ENCODE measurements at regions of chr6 and their contacts with region 1.

Region 1: GRCh38 chr6:5143634-5144311 is 58.6 kb downstream of the PPP1R3G start:
- DNase-seq: peak; percentile 87
- H3K4me3 Mint-ChIP-seq: no peak overlapping the region
- H3K27ac Mint-ChIP-seq: no peak overlapping the region
- H3K4me1 Mint-ChIP-seq: peaks cover 1% of the 10 kb centered on the region
- H3K27me3 Mint-ChIP-seq: no peaks in the 10 kb centered on the region

Region 2: GRCh38 chr6:4928426-4928825 is 215.3 kb before region 1 on chr6:
- CTCF ChIA-PET with region 1: no interaction called
- POLR2A ChIA-PET with region 1: no interaction called
- DNase-seq: no peak
- H3K4me3 Mint-ChIP-seq: no peak overlapping the region
- H3K27ac Mint-ChIP-seq: no peak overlapping the region
- H3K4me1 Mint-ChIP-seq: peaks cover 24% of the 10 kb centered on the region
- H3K27me3 Mint-ChIP-seq: no peaks in the 10 kb centered on the region

Region 3: GRCh38 chr6:5053038-5053437 is 90.7 kb before region 1 on chr6:
- CTCF ChIA-PET with region 1: no interaction called
- POLR2A ChIA-PET with region 1: no interaction called
- DNase-seq: no peak
- H3K4me3 Mint-ChIP-seq: no peak overlapping the region
- H3K27ac Mint-ChIP-seq: no peak overlapping the region
- H3K4me1 Mint-ChIP-seq: peaks cover 2% of the 10 kb centered on the region
- H3K27me3 Mint-ChIP-seq: peaks cover 9% of the 10 kb centered on the region

Region 4: GRCh38 chr6:5174244-5174643 is 30.5 kb after region 1 on chr6:
- CTCF ChIA-PET with region 1: interaction called, 18 read pairs
- POLR2A ChIA-PET with region 1: interaction called, 12 read pairs
- DNase-seq: peak; percentile 79
- H3K4me3 Mint-ChIP-seq: peak overlapping the region; percentile 57
- H3K27ac Mint-ChIP-seq: peak overlapping the region; percentile 89
- H3K4me1 Mint-ChIP-seq: peaks cover 50% of the 10 kb centered on the region
- H3K27me3 Mint-ChIP-seq: no peaks in the 10 kb centered on the region

Region 5: GRCh38 chr6:5214570-5215052 is 70.8 kb after region 1 on chr6:
- CTCF ChIA-PET with region 1: interaction called, 11 read pairs
- POLR2A ChIA-PET with region 1: no interaction called
- DNase-seq: peak; percentile 42
- H3K4me3 Mint-ChIP-seq: no peak overlapping the region
- H3K27ac Mint-ChIP-seq: no peak overlapping the region
- H3K4me1 Mint-ChIP-seq: peaks cover 9% of the 10 kb centered on the region
- H3K27me3 Mint-ChIP-seq: no peaks in the 10 kb centered on the region

Region 6: GRCh38 chr6:5260661-5261544 is 117.1 kb after region 1 on chr6 and contains the starts of genes FARS2 and LYRM4:
- CTCF ChIA-PET with region 1: interaction called, 15 read pairs
- POLR2A ChIA-PET with region 1: interaction called, 4 read pairs
- DNase-seq: peak; percentile 91
- H3K4me3 Mint-ChIP-seq: peak within 1 kb of the TSS; percentile 99
- H3K27ac Mint-ChIP-seq: peak within 1 kb of the TSS; percentile 96
- H3K4me1 Mint-ChIP-seq: peaks cover 60% of the 10 kb centered on the region
- H3K27me3 Mint-ChIP-seq: no peaks in the 10 kb centered on the region
- total RNA-seq, gene FARS2: 17.6 to 18.7 TPM
- total RNA-seq, gene LYRM4: 21.2 to 22.7 TPM

Region 7: DNA sequence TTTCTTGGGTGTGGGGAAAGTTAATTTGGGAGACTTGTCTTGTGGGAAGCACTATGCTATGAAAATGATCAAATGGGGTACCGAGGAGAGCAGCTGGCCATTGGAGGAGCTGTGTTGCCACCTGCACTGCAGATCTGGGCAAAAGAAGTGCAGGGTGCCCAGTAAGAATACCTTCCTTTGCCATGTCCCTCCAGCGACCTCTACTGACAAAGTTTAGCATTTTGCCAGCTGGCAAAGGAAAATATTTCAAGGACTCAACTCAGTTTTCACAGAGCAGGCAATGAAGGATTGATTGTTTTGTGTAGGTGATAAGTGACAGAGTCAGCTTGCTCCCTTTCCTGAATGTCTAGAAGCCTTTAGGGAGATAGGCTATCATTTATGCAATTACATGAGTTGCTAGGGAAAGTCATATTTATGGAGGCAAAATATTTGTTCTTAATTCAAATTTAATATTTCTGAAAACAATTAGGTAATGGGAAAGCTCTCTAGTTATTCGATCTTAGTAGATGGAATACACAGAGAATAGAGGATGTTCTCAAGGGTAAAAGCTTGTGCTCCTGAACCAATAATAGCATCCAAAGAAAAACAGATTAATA is 236.0 kb after region 1 on chr6:
- CTCF ChIA-PET with region 1: interaction called, 48 read pairs
- POLR2A ChIA-PET with region 1: no interaction called
- DNase-seq: peak; percentile 32
- H3K4me3 Mint-ChIP-seq: no peak overlapping the region
- H3K27ac Mint-ChIP-seq: no peak overlapping the region
- H3K4me1 Mint-ChIP-seq: no peaks in the 10 kb centered on the region
- H3K27me3 Mint-ChIP-seq: no peaks in the 10 kb centered on the region

Region 8: GRCh38 chr6:5439759-5440158 is 296.0 kb after region 1 on chr6:
- CTCF ChIA-PET with region 1: no interaction called
- POLR2A ChIA-PET with region 1: no interaction called
- DNase-seq: no peak
- H3K4me3 Mint-ChIP-seq: no peak overlapping the region
- H3K27ac Mint-ChIP-seq: no peak overlapping the region
- H3K4me1 Mint-ChIP-seq: peaks cover 2% of the 10 kb centered on the region
- H3K27me3 Mint-ChIP-seq: no peaks in the 10 kb centered on the region

Region 9: GRCh38 chr6:5471044-5471443 is 327.3 kb after region 1 on chr6:
- CTCF ChIA-PET with region 1: interaction called, 10 read pairs
- POLR2A ChIA-PET with region 1: no interaction called
- DNase-seq: peak; percentile 68
- H3K4me3 Mint-ChIP-seq: no peak overlapping the region
- H3K27ac Mint-ChIP-seq: no peak overlapping the region
- H3K4me1 Mint-ChIP-seq: no peaks in the 10 kb centered on the region
- H3K27me3 Mint-ChIP-seq: no peaks in the 10 kb centered on the region